Calu3 (cell line): ENCODE measurements at regions of chr2 and their contacts with region 1.

Region 1: DNA sequence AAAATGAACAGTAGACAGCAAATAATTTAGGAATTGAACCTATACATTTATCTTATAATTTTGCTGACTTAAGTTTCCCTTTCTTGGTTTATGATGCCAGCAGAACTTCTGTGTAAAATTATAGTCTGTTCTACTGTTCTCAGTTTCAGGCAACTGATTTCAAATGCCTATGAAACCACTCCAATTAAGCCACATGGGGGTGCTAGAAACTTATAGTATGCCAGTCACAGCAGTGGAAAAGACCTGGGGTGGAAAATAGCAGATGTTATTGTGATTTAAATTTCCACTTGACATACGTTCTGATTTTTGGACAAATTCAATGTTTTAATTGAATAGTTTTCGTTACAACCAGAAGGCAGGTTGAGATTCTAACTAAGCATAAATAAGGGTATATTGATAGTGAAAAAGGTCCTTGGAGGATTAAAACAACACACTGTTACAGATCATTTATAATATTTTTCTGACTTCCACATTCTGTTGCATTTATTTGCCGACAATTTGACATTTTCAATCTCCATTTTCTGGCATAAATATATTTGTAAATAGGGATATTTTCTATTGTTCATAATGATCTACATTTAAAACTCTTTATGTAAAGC is 61.4 kb downstream of the CPS1 start:
- DNase-seq: peak; percentile 39
- H3K4me3 Mint-ChIP-seq: no peak overlapping the region
- H3K27ac Mint-ChIP-seq: no peak overlapping the region
- H3K4me1 Mint-ChIP-seq: no peaks in the 10 kb centered on the region
- H3K27me3 Mint-ChIP-seq: no peaks in the 10 kb centered on the region
- CTCF ChIP-seq: peak; percentile 54

Region 2: DNA sequence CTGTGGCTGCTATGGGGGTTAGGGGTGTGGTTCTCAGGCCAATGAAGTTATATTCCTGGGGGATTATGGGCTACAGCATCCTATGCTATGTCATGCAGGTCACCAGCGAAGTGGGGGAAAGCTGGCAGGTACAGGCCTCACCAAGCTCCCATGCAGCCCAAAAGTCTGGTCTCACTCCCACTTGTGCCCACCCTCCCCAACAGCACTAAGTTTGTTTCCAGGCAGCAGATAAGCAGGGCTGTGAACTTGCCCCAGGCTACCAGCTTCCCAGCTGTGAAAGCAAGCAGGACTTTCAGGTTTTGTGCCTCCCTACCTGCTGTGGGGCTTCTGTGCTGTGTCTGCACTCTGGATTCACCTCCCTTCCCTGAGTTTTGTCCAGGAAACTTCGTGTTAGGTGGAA is 408.3 kb after region 1 on chr2:
- CTCF ChIA-PET with region 1: no interaction called
- intact Hi-C with region 1: no loop called
- DNase-seq: no peak
- H3K4me3 Mint-ChIP-seq: no peak overlapping the region
- H3K27ac Mint-ChIP-seq: no peak overlapping the region
- H3K4me1 Mint-ChIP-seq: no peaks in the 10 kb centered on the region
- H3K27me3 Mint-ChIP-seq: no peaks in the 10 kb centered on the region
- CTCF ChIP-seq: no peak

Region 3: GRCh38 chr2:211077211-211077767 is 459.5 kb after region 1 on chr2:
- CTCF ChIA-PET with region 1: no interaction called
- intact Hi-C with region 1: loop called (anchors 5 kb)
- DNase-seq: no peak
- H3K4me3 Mint-ChIP-seq: no peak overlapping the region
- H3K27ac Mint-ChIP-seq: no peak overlapping the region
- H3K4me1 Mint-ChIP-seq: peaks cover 6% of the 10 kb centered on the region
- H3K27me3 Mint-ChIP-seq: no peaks in the 10 kb centered on the region
- CTCF ChIP-seq: no peak